Caco-2 (cell line): ENCODE measurements at regions of chr18 and their contacts with region 1.

Region 1: GRCh38 chr18:55234366-55235093 is 275.3 kb upstream of the CCDC68 start:
- DNase-seq: peak; percentile 60 to 61
- H3K4me3 ChIP-seq: no peak overlapping the region
- H3K4me3 Mint-ChIP-seq: no peak overlapping the region
- H3K27ac Mint-ChIP-seq: no peak overlapping the region
- H3K4me1 ChIP-seq: peaks cover 9% of the 10 kb centered on the region; the same call in 1 of the 2 replicates
- H3K4me1 Mint-ChIP-seq: no peaks in the 10 kb centered on the region
- H3K27me3 ChIP-seq: no peaks in the 10 kb centered on the region
- H3K27me3 Mint-ChIP-seq: no peaks in the 10 kb centered on the region
- CTCF ChIP-seq: peak; percentile 50 to 64

Region 2: DNA sequence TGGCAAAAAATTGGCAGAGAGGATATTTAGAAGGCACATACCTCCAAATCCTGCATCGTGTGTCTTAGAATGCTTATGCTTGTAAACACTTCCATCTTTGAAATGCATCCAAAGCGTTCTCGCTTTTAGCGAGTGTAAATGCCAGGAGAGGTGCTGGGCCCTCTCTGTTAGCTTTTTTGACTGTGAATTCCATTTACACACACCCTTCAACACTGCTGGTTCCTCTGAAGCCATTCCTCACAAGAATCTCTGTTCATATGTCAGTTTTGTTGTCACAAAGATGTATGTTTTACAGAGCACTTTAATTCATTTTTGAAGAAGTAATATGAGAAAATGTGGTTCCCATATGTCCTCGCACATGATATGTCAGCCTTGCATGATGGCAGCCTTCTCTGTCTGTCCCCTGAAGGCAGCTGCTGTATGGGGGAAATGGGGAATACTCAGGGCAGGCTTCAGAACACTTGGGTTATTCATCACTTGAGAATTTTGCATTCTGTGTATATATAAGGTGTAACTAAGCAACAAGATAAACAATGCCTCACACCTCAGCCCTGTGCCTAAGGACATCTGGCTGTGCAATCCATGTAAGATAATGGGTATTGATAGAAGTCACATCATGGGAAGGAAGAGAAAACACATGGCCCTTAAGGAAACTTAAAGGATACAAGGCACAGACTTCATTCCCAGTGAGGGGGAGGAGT is 354.0 kb before region 1 on chr18:
- CTCF ChIA-PET with region 1: no interaction called
- POLR2A ChIA-PET with region 1: no interaction called
- intact Hi-C with region 1: no loop called
- DNase-seq: peak in 1 of 2 experiments; percentile 1
- H3K4me3 ChIP-seq: no peak overlapping the region
- H3K4me3 Mint-ChIP-seq: no peak overlapping the region
- H3K27ac Mint-ChIP-seq: no peak overlapping the region
- H3K4me1 ChIP-seq: no peaks in the 10 kb centered on the region
- H3K4me1 Mint-ChIP-seq: no peaks in the 10 kb centered on the region
- H3K27me3 ChIP-seq: no peaks in the 10 kb centered on the region
- H3K27me3 Mint-ChIP-seq: no peaks in the 10 kb centered on the region
- CTCF ChIP-seq: no peak

Region 3: DNA sequence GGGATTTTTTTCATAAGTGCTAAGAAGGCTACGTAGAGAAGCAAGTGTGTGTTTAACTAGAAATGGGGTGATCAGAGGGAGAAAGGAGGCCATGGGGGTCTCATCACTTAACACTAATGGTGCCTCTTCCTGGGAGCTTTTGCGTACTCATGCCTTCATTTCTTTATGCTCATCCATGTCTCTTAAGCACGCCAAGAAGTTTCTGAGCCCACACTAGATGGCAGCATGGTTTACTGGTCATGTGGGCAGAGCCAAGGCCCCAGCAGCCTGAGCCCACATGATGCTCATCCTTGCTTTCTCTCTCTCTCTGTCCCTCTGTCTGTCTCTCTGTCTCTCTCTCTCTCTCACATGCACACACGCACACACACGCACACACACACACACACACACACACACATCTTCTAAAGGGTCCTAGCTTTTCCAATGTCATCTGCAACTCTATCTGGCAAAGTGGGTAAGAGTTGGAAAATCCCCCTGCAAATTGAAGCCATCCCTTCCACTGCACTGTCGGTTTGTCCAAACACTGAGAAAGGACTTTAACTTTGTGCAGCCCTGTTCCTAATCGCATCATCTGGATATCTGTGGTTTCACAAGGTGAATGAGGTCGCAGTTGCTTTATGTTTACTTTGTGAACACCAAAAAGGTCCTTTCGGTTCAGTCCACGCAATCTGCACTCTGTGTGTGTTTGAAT is 138.1 kb before region 1 on chr18:
- CTCF ChIA-PET with region 1: interaction called, 3 read pairs
- POLR2A ChIA-PET with region 1: no interaction called
- intact Hi-C with region 1: loop called (anchors 5 kb)
- DNase-seq: peak; percentile 50 to 56
- H3K4me3 ChIP-seq: no peak overlapping the region
- H3K4me3 Mint-ChIP-seq: no peak overlapping the region
- H3K27ac Mint-ChIP-seq: peak overlapping the region; percentile 92
- H3K4me1 ChIP-seq: peaks cover 66% of the 10 kb centered on the region
- H3K4me1 Mint-ChIP-seq: peaks cover 42% of the 10 kb centered on the region
- H3K27me3 ChIP-seq: no peaks in the 10 kb centered on the region
- H3K27me3 Mint-ChIP-seq: no peaks in the 10 kb centered on the region
- CTCF ChIP-seq: peak in 1 of 2 experiments; percentile 10

Region 4: GRCh38 chr18:55275039-55275901 is 40.7 kb after region 1 on chr18:
- CTCF ChIA-PET with region 1: no interaction called
- POLR2A ChIA-PET with region 1: no interaction called
- intact Hi-C with region 1: loop called (anchors 2 kb)
- DNase-seq: peak in 1 of 2 experiments; percentile 37
- H3K4me3 ChIP-seq: no peak overlapping the region
- H3K4me3 Mint-ChIP-seq: no peak overlapping the region
- H3K27ac Mint-ChIP-seq: no peak overlapping the region
- H3K4me1 ChIP-seq: peaks cover 6% of the 10 kb centered on the region; the same call in 1 of the 2 replicates
- H3K4me1 Mint-ChIP-seq: no peaks in the 10 kb centered on the region
- H3K27me3 ChIP-seq: no peaks in the 10 kb centered on the region
- H3K27me3 Mint-ChIP-seq: no peaks in the 10 kb centered on the region
- CTCF ChIP-seq: no peak

Region 5: DNA sequence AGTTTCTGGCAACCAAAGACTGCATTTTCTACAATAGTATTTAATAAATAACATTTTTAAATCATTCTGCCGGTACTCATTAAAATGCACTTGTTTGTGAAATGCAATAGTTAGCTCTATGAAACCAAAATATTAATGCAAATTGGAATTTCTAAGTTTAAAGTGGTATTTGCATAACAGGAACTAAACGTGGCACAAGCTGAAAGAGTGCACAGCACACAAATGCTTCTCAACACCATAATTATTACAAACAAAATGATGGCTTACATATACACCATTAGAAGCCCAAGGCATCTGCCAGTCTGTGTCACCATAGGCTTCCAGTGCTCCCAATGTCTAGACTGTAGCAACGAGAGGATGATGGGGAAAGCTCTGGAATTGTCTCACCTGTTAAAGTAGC is 73.0 kb after region 1 on chr18:
- CTCF ChIA-PET with region 1: no interaction called
- POLR2A ChIA-PET with region 1: no interaction called
- intact Hi-C with region 1: no loop called
- DNase-seq: no peak
- H3K4me3 ChIP-seq: no peak overlapping the region
- H3K4me3 Mint-ChIP-seq: no peak overlapping the region
- H3K27ac Mint-ChIP-seq: no peak overlapping the region
- H3K4me1 ChIP-seq: no peaks in the 10 kb centered on the region
- H3K4me1 Mint-ChIP-seq: no peaks in the 10 kb centered on the region
- H3K27me3 ChIP-seq: no peaks in the 10 kb centered on the region
- H3K27me3 Mint-ChIP-seq: no peaks in the 10 kb centered on the region
- CTCF ChIP-seq: no peak

Region 6: DNA sequence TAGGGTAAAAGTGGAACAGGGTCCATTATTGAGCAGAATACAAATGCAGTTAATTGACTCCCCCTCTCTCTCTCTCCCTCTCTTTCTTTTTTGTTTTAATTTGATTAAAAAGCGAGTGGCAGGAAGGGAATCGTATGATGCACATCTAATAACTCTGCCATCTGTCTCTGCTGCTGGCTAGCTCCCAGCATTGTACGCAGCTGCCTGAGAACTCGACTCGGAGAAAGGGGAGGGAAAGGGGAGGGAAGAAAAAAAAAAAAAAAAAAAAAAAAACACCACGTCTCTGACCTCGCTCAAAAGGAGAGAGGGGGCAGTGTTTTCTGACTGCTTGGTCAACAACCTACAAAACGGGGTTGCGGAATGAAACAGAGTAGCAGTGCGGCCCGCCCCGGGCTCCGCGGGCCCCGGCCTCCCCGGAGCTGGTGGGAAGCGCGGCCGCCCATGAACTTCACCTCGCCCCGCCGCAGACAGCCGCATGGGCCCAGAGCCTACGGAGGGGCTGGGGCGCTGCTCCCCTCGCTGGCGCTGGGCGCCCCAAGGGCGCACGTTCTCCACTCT is 87.7 kb after region 1 on chr18:
- CTCF ChIA-PET with region 1: interaction called, 6 read pairs
- POLR2A ChIA-PET with region 1: no interaction called
- intact Hi-C with region 1: loop called (anchors 5 kb)
- DNase-seq: peak; percentile 61 to 65
- H3K4me3 ChIP-seq: peak overlapping the region; percentile 39
- H3K4me3 Mint-ChIP-seq: peak overlapping the region; percentile 89
- H3K27ac Mint-ChIP-seq: peak overlapping the region; percentile 70
- H3K4me1 ChIP-seq: peaks cover 6% of the 10 kb centered on the region
- H3K4me1 Mint-ChIP-seq: peaks cover 8% of the 10 kb centered on the region
- H3K27me3 ChIP-seq: no peaks in the 10 kb centered on the region
- H3K27me3 Mint-ChIP-seq: no peaks in the 10 kb centered on the region
- CTCF ChIP-seq: no peak

Region 7: DNA sequence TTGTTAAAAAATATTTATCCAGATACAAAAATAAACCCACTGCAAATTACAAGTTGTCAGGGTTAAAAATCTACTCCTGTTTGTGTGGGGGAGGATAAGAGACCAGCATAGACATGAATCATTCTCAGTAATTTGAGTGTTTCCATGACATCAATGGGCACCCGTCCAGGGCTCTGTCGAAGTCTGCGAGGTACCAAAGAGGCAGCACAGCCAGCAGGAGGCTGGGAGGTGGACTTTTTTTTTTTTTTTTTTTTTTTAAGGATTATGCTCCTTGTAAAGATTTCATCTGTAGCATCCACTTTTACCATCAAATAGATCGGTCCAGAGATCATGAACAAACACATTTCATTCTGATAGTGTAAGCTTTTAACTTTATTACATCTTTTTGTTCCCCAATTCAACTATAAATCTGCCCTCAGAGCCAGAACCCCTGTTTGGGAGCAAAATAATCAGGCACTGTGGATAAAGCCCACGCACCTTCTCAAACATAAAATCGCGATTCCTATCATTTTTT is 171.4 kb after region 1 on chr18:
- CTCF ChIA-PET with region 1: no interaction called
- POLR2A ChIA-PET with region 1: no interaction called
- intact Hi-C with region 1: loop called (anchors 10 kb)
- DNase-seq: no peak
- H3K4me3 ChIP-seq: no peak overlapping the region
- H3K4me3 Mint-ChIP-seq: no peak overlapping the region
- H3K27ac Mint-ChIP-seq: no peak overlapping the region
- H3K4me1 ChIP-seq: peaks cover 5% of the 10 kb centered on the region; the same call in 1 of the 2 replicates
- H3K4me1 Mint-ChIP-seq: peaks cover 13% of the 10 kb centered on the region
- H3K27me3 ChIP-seq: no peaks in the 10 kb centered on the region
- H3K27me3 Mint-ChIP-seq: no peaks in the 10 kb centered on the region
- CTCF ChIP-seq: no peak

Region 8: GRCh38 chr18:56575819-56576663 is 1341.5 kb after region 1 on chr18:
- CTCF ChIA-PET with region 1: no interaction called
- POLR2A ChIA-PET with region 1: no interaction called
- intact Hi-C with region 1: loop called (anchors 5 kb)
- DNase-seq: peak in 1 of 2 experiments; percentile 22
- H3K4me3 ChIP-seq: no peak overlapping the region
- H3K4me3 Mint-ChIP-seq: no peak overlapping the region
- H3K27ac Mint-ChIP-seq: no peak overlapping the region
- H3K4me1 ChIP-seq: no peaks in the 10 kb centered on the region
- H3K4me1 Mint-ChIP-seq: peaks cover under 1% of the 10 kb centered on the region
- H3K27me3 ChIP-seq: no peaks in the 10 kb centered on the region
- H3K27me3 Mint-ChIP-seq: peaks cover 3% of the 10 kb centered on the region
- CTCF ChIP-seq: peak; percentile 23 to 26